Activated naive CD4-positive, alpha-beta T cell treated with anti-CD3 and anti-CD28 coated beads for 36 hours (primary cell): ENCODE measurements at regions of chr6 and their contacts with region 1.

Region 1: DNA sequence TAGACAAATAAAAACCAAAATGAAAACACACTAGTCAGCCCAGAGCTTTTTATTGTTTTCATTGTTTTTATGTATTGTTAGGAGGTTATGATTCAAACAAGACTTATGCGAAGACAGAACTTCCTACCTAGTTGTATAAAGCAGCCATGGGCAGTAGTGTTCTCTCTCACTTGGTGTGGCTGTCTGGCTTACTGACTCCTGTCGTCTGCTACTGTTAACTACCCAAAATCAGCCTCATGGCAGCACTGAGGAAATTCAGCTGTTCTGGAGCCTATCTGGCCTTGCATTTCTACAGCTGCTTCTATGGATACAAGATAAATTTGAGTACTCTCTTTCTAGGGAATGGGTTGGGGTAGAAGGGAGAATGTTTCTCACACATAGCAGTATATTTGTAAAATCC is 20.4 kb downstream of the VTA1 start:
- DNase-seq: no peak
- H3K4me3 Mint-ChIP-seq: no peak overlapping the region
- H3K27ac Mint-ChIP-seq: no peak overlapping the region
- H3K4me1 Mint-ChIP-seq: peaks cover 6% of the 10 kb centered on the region
- H3K27me3 Mint-ChIP-seq: no peaks in the 10 kb centered on the region

Region 2: DNA sequence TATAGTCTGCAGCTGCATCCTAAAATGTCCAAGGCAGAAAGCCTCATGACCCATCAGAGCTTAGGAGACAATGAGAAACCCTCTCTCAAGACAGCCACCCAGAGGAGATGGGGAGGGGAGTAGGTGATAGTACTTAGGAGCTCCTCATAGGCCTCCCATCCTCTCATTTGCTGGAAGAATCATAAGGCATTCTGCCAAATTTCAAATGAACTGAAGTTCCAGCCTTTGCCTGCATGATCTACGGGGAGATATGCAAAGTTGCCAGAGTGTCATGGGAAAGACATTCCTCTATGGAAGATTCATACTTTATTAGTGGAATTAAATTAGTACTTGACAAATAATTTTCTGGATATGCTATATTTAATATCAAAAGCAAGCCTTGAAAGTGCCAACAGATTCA is 228.8 kb before region 1 on chr6:
- CTCF ChIA-PET with region 1: no interaction called
- intact Hi-C with region 1: no loop called
- DNase-seq: no peak
- H3K4me3 Mint-ChIP-seq: no peak overlapping the region
- H3K27ac Mint-ChIP-seq: no peak overlapping the region
- H3K4me1 Mint-ChIP-seq: no peaks in the 10 kb centered on the region
- H3K27me3 Mint-ChIP-seq: peaks cover 3% of the 10 kb centered on the region

Region 3: GRCh38 chr6:142146828-142147662 is 20.4 kb before region 1 on chr6 and contains the starts of genes NMBR and VTA1:
- CTCF ChIA-PET with region 1: no interaction called
- intact Hi-C with region 1: no loop called
- DNase-seq: peak; percentile 98
- H3K4me3 Mint-ChIP-seq: peak within 1 kb of the TSS; percentile 93
- H3K27ac Mint-ChIP-seq: peak within 1 kb of the TSS; percentile 91
- H3K4me1 Mint-ChIP-seq: peaks cover 53% of the 10 kb centered on the region
- H3K27me3 Mint-ChIP-seq: no peaks in the 10 kb centered on the region
- total RNA-seq, gene NMBR: not detected
- total RNA-seq, gene VTA1: 54.7 to 57.3 TPM

Region 4: GRCh38 chr6:142184307-142184706 is 16.8 kb after region 1 on chr6:
- CTCF ChIA-PET with region 1: interaction called, 3 read pairs
- intact Hi-C with region 1: loop called (anchors 2 kb)
- DNase-seq: no peak
- H3K4me3 Mint-ChIP-seq: no peak overlapping the region
- H3K27ac Mint-ChIP-seq: no peak overlapping the region
- H3K4me1 Mint-ChIP-seq: peaks cover 6% of the 10 kb centered on the region
- H3K27me3 Mint-ChIP-seq: no peaks in the 10 kb centered on the region

Region 5: GRCh38 chr6:142223938-142224337 is 56.5 kb after region 1 on chr6:
- CTCF ChIA-PET with region 1: no interaction called
- intact Hi-C with region 1: no loop called
- DNase-seq: no peak
- H3K4me3 Mint-ChIP-seq: no peak overlapping the region
- H3K27ac Mint-ChIP-seq: no peak overlapping the region
- H3K4me1 Mint-ChIP-seq: no peaks in the 10 kb centered on the region
- H3K27me3 Mint-ChIP-seq: no peaks in the 10 kb centered on the region